ENCODE measurements at regions of chr7 and their contacts with region 1.

Region 1: GRCh38 chr7:148940702-148941597 is 56.9 kb upstream of the EZH2 start:
- DNase-seq: peak; percentile 92
- H3K4me3 Mint-ChIP-seq: peak overlapping the region; percentile 97
- H3K27ac Mint-ChIP-seq: peak overlapping the region; percentile 99
- H3K4me1 Mint-ChIP-seq: peaks cover 17% of the 10 kb centered on the region
- H3K27me3 Mint-ChIP-seq: no peaks in the 10 kb centered on the region

Region 2: DNA sequence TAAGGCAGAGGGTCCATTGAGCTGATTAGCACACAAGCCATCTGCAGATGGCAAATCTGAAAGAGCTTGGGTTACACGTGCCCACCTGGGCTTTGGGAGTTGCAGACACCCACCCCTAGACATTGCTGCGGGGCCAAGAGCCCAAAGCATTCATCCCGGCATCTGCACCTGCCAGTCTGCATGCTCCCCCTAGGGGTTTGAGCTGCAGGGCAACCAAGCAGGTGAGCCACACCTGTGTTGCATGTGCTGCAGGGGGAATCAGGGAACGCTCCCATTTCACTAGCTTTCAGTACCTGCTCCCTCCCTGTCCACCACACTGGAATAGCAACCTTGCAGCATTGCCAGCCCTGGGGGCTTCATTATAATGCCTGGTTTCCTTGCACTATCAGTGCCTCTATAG is 329.3 kb before region 1 on chr7:
- intact Hi-C with region 1: no loop called
- DNase-seq: no peak
- H3K4me3 Mint-ChIP-seq: no peak overlapping the region
- H3K27ac Mint-ChIP-seq: no peak overlapping the region
- H3K4me1 Mint-ChIP-seq: no peaks in the 10 kb centered on the region
- H3K27me3 Mint-ChIP-seq: peaks cover 24% of the 10 kb centered on the region

Region 3: DNA sequence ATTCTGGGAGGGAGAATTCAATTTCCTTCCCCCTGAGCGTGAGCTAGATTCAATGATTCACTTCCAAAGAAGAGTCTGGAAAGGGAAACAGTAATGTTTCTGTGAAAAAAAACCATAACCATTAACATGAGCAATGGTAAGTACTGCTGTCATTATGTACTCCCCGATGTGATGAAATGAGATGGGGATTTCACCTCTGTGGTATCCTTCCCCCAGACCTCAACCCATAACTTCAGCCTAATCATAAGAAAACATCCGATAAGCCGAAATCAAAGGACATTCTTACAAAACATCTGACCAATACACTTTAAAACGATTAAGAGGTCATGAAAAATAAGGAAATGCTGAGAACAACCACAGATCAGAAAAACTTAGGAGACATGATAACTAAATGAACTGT is 84.1 kb before region 1 on chr7:
- intact Hi-C with region 1: loop called (anchors 1 kb)
- DNase-seq: no peak
- H3K4me3 Mint-ChIP-seq: peak overlapping the region; percentile 32
- H3K27ac Mint-ChIP-seq: peak overlapping the region; percentile 79
- H3K4me1 Mint-ChIP-seq: peaks cover 40% of the 10 kb centered on the region
- H3K27me3 Mint-ChIP-seq: no peaks in the 10 kb centered on the region

Region 4: GRCh38 chr7:148877517-148877916 is 63.4 kb before region 1 on chr7:
- intact Hi-C with region 1: no loop called
- DNase-seq: no peak
- H3K4me3 Mint-ChIP-seq: no peak overlapping the region
- H3K27ac Mint-ChIP-seq: no peak overlapping the region
- H3K4me1 Mint-ChIP-seq: peaks cover 48% of the 10 kb centered on the region
- H3K27me3 Mint-ChIP-seq: no peaks in the 10 kb centered on the region

Region 5: GRCh38 chr7:148925836-148926235 is 15.1 kb before region 1 on chr7:
- intact Hi-C with region 1: loop called (anchors 1 kb)
- DNase-seq: no peak
- H3K4me3 Mint-ChIP-seq: no peak overlapping the region
- H3K27ac Mint-ChIP-seq: no peak overlapping the region
- H3K4me1 Mint-ChIP-seq: peaks cover 46% of the 10 kb centered on the region
- H3K27me3 Mint-ChIP-seq: no peaks in the 10 kb centered on the region

Region 6: DNA sequence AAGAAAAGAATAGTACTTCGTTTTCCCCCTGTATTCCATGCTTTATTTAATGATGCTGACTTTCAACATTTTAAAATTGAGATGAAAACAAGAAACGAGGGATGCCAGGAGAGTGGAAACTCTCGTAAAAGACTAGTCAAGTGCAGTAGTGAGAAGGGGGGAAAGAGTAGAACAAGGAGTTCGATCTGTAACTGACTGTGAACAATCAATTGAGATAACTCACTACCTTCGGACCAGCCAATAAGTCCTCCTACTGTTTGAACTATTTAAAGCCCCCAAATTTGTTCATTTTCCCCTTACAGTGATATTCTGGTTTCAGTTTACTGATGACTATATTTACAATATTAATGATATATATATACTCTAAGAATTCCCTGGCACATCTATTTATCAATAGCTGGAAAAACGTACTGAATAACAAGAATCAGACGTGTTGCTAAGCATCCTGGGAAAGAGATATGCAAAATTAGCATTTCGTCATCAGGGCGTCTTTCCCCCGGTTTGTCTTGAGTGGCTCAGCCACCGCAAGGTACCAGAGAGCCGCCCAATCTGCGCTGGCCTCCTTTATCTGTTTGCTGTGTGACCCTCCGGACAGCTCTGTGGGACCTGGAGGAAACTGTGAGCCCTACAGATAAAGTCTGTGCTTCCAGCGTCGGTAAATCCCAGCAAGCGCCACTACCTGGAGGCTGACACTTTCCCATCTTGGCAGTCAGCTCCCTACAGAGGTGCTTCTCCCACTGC is 46.2 kb after region 1 on chr7:
- intact Hi-C with region 1: loop called (anchors 2 kb)
- DNase-seq: peak; percentile 94
- H3K4me3 Mint-ChIP-seq: peak overlapping the region; percentile 95
- H3K27ac Mint-ChIP-seq: peak overlapping the region; percentile 94
- H3K4me1 Mint-ChIP-seq: peaks cover 41% of the 10 kb centered on the region
- H3K27me3 Mint-ChIP-seq: peaks cover 23% of the 10 kb centered on the region